ENCODE measurements at regions of chr22 and their contacts with region 1.

Region 1: DNA sequence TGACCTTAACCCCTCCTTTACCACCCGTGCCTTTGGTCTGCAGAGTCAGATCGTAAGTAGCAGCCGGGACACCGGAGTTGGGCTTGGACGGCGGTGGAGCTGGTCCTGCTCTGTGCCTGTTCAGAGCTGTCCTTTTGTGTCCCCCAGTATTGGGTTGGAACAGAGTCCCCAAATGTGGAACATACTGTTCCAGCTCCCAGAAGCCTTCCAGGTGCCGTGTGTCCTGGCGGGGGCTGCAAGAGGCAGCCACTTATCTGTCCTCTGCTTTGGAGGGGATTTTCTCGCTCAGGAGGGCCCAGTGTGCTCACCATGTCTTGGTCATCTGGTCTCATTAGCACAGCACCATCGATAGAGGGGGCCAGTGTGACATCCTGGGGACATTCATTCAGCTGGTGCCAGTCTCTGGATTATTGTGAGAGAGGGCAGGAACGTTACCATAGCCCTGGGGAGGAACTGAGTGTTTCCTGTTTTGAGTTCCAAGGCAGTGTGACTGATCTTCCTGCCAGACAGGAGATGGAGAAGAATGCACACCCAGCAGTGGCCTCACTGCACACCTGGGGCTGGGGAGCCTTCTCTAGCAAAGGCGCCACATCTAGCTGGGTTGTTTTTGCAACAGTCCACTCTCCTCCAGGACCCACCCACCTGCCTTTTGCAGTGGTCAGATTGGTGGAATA is 12.4 kb downstream of the CRELD2 start:
- DNase-seq: peak; percentile 76
- ATAC-seq: peak; percentile 52

Region 2: DNA sequence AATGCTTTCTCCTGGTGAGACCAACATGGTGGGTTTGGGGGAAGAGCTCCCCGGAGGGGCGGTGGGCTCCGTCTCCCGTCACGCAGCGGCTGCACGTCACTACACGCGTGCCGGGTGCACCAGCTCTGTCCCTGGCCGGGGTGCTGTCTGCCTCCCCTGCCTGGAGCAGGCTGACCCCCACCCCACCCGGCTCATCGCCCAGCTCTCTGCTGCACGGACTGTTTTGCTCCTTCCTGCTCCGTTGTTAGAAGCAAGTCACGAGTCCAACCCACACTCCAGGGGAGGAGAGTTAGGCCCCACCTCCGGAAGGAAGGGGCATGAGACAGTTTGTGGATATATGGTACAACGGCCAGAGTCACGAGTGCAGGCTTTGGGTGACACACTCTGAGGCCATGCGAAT is 468.1 kb before region 1 on chr22:
- intact Hi-C with region 1: no loop called
- DNase-seq: no peak
- ATAC-seq: no peak

Region 3: DNA sequence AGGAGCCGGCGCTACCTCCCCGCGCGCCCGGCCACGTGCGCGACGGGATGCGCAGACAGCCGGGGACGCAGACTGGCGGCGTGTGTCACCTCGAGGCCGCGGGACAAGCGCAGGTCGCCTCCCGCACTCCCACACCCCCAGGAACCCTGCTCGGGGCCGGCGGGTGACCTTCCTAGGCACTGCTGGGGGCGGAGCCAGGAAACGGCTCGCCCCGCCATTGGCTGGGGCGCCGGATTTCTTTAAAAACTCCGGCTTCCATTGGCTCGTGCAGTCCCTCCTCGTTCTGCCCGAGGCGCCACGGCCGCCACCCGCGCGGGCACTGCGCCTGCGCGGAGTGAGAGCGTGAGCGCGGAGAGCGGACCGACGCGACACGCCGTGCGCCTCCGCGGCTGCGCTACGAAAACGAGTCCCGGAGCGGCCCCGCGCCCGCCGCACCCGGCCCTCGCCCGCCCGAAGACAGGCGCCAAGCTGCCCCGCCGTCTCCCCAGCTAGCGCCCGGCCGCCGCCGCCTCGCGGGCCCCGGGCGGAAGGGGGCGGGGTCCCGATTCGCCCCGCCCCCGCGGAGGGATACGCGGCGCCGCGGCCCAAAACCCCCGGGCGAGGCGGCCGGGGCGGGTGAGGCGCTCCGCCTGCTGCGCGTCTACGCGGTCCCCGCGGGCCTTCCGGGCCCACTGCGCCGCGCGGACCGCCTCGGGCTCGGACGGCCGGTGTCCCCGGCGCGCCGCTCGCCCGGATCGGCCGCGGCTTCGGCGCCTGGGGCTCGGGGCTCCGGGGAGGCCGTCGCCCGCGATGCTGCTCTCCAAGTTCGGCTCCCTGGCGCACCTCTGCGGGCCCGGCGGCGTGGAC is 29.5 kb after region 1 on chr22 and contains the start of gene PIM3:
- intact Hi-C with region 1: loop called (anchors 2 kb)
- DNase-seq: peak; percentile 97
- ATAC-seq: peak; percentile 83
- total RNA-seq, gene PIM3: 61.5 TPM

Region 4: DNA sequence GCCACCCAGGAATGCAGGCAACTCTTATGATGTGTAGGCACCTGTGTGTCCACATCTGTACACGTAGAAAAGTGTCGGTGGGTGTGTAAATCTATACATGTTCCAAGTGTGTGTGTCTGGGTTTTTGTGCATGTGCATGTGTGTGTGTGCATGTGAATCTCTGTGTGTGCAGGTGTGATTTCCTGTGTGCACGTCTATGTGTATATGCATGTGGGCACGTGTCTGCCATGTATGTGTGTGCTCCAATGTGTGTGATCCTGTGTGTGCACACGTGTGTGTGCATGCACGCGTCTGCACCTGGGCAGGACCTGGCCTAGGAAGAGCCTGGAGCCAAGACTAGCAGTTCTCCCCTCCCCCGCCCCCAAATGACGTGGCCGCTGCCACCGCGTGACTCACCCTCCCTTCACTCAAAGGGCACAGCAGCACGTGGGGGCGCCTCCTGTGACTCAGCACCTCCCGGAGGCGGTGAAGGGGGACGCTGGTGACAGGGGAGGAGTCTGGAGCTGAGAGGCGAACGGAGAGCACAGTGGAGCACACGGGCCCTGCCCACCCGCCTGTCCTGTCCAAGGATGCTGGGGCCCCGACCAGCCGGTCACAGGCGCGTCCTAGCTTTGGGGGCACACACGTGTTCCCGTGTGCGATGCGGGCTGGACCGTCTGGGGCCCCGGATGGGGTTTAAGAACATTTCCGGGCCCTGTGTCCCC is 39.8 kb after region 1 on chr22:
- intact Hi-C with region 1: loop called (anchors 5 kb)
- DNase-seq: peak; percentile 94
- ATAC-seq: peak; percentile 87

Region 5: GRCh38 chr22:50030297-50031188 is 99.7 kb after region 1 on chr22:
- intact Hi-C with region 1: loop called (anchors 2 kb)
- DNase-seq: peak; percentile 83
- ATAC-seq: peak; percentile 94